Activated T-helper 1 cell treated with anti-CD3 and anti-CD28 coated beads, Interleukin-12 subunit alpha, Interleukin-12 subunit beta, Interleukin-2, Interleukin-4 antibody, amounts not matched to agents 30 ng/mL and 10 ng/mL and 1 ng/mL, durations not matched to agents 14 hours and 24 hours and 36 hours (primary cell): ENCODE measurements at regions of chr11 and their contacts with region 1.

Region 1: GRCh38 chr11:535519-536454 is at the start of gene HRAS:
- DNase-seq: peak; percentile 97
- H3K4me3 Mint-ChIP-seq: peak within 1 kb of the TSS; percentile 87
- H3K27ac Mint-ChIP-seq: peak within 1 kb of the TSS; percentile 89
- H3K4me1 Mint-ChIP-seq: peaks cover 9% of the 10 kb centered on the region
- H3K27me3 Mint-ChIP-seq: no peaks in the 10 kb centered on the region
- total RNA-seq, gene HRAS: 76.6 and 88.7 TPM in 2 replicates

Region 2: DNA sequence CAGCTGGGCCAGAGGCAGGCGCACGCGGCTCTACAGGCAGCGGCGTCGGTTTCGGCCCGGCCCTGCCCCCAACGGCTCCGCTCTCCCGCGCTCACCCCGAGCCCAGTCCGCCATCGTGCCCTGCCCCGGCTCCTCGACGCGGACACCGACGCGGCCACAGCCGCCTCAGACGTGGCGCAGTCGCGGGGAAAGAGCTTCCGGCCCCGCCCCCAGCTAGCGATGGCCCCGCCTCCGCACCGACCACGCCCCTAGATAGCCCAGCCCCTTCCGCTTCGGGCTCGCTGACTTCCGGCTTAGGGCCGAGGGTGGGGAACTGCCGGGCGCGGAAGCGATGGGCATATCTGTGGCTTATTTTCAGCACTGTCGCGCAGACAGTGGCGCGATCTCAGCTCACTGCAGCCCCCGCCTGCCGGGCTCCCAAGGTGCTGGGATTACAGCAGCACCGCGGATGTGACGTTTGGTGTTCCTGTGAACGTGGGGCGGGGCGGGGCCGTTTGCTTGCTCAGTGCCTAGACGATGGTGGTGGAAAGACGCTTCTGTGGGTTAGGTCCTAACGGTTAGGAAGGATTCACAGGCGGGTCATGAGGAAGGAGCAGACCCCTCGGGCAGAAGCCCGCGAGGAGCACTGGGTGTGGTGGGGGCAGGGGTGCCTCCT is 328.5 kb before region 1 on chr11 and contains the starts of genes BET1L and RIC8A:
- intact Hi-C with region 1: loop called (anchors 1 kb)
- DNase-seq: peak; percentile 97
- H3K4me3 Mint-ChIP-seq: peak within 1 kb of the TSS; percentile 89
- H3K27ac Mint-ChIP-seq: peak within 1 kb of the TSS; percentile 98
- H3K4me1 Mint-ChIP-seq: peaks cover 55% of the 10 kb centered on the region
- H3K27me3 Mint-ChIP-seq: no peaks in the 10 kb centered on the region
- total RNA-seq, gene BET1L: 42.0 and 48.7 TPM in 2 replicates
- total RNA-seq, gene RIC8A: 132 and 149 TPM in 2 replicates

Region 3: DNA sequence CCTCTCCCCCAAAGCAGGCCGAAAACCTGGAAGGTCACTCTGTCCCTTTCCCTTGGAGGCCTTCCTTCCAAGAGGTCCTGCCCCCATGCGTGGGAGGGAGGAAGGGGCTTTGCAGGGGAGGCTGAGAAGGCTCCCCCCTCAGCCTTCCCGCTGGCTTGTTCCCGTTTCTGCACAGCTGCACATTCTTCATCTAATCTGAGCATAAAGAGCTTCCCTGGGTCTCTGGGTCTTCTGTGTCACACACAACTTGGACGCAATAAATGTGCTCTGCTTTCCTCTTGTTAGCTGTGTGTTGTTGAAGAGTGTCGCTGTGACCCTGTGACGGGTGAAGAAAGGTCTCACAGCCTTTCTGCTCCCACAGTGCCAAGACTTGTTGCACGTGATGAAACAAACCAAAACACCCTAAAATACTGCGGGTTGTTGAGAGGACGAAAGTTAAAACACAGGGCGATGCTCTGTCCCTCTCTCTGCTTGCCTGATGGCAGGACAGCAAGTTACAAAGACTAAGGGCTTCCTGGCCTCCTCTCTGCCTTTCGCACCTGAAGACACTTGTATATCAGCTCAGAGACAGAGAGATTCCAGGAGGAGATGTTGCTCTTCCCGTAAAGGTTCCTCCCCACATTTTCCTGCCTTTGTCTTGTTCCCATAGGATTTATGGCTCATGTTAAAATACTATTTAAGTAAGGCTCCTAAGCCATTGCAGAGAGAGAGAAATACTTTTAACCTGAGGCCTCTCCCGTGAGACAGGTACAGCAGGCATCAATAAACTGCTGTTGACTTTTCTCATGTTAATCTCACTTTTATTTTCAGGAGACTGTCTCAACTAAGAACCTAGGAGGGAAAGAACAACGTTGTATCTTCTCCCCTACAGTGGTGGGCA is 199.8 kb before region 1 on chr11:
- intact Hi-C with region 1: no loop called
- DNase-seq: no peak
- H3K4me3 Mint-ChIP-seq: no peak overlapping the region
- H3K27ac Mint-ChIP-seq: no peak overlapping the region
- H3K4me1 Mint-ChIP-seq: peaks cover 14% of the 10 kb centered on the region
- H3K27me3 Mint-ChIP-seq: peaks cover 2% of the 10 kb centered on the region

Region 4: DNA sequence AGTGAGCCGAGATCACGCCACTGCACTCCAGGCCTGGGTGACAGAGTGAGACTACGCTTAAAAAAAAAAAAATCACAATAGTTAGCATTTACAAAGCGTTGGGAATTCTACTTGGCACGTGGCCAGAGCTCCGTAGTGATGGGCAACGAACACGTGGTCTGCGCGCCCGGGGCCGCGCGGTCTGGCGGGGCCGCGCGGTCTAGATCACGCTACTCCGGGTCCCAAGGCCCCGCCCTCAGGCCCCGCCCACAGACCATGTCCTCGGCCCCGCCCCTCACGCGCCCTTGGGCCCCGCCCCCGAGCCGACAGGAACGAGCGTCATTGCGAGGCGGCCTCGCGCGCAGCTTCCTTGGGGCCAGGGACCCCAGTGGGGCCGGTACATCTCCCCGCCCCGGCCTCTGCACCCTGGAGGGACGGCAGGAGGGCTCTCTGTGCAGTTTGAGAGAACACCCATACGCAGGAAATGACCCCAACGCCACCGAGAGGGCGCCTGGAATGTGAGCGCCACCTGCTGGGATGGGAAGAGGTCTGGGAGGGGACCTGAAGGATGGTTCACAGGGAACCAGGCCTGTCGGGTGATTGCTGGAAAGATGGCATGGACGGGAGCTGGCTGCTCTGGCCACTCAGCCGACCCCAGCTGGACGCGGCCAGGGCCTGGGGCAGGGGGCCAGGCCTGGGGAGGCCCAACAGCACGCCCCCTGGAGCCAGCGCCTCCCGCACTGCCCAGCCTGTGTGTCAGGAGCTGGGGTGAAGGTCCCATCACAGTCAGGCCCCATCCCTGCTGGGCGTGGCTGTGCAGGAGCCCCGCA is 87.7 kb before region 1 on chr11:
- intact Hi-C with region 1: loop called (anchors 1 kb)
- DNase-seq: peak; percentile 92
- H3K4me3 Mint-ChIP-seq: peak overlapping the region; percentile 88
- H3K27ac Mint-ChIP-seq: peak overlapping the region; percentile 91
- H3K4me1 Mint-ChIP-seq: peaks cover 16% of the 10 kb centered on the region
- H3K27me3 Mint-ChIP-seq: no peaks in the 10 kb centered on the region

Region 5: GRCh38 chr11:554824-555472 is 19.2 kb after region 1 on chr11:
- intact Hi-C with region 1: loop called (anchors 1 kb)
- DNase-seq: peak; percentile 71
- H3K4me3 Mint-ChIP-seq: no peak overlapping the region
- H3K27ac Mint-ChIP-seq: no peak overlapping the region
- H3K4me1 Mint-ChIP-seq: peaks cover 4% of the 10 kb centered on the region
- H3K27me3 Mint-ChIP-seq: peaks cover 10% of the 10 kb centered on the region

Region 6: DNA sequence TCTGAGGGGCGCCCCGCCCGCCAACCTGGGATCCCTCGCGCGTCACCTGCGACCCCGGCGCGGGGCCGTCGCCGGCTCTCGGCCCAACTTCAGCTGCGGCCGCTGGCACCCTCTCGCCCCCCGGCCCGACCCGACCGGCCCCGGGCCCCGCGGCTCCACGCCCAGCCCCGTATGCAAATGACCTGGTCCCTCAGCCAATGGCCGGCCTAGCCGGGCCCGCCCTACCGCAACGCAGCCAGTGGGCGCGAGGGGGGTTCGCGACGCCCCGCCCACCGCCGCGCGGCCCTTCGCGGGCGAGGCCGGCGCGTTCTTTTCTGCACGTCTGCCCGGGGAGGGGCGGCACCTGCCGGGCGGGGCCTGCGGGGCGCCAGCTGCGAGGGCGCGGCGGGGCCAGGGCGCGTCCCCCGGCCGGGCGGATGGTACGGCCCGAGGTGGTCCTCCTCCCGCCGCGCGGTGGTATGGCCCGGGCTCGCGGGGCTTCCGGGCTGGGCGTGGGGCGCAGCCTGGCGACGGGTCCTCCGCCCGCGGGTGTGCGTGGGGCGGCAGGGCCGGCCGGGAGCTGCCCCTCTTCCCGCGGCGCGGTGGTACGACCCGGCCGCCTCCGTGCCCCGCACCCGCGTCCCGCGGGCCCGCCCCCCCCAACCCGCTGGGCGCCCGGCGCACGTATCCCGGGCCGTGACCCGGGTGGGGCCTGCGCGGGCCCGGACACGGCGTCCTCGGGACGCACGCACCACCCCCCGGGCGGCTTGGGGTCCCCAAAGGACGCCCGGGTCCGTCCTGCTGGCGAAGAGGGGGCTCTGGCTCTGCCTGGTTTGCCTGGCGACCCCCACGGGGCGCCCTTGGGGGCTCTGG is 32.7 kb after region 1 on chr11:
- intact Hi-C with region 1: loop called (anchors 2 kb)
- DNase-seq: peak; percentile 97
- H3K4me3 Mint-ChIP-seq: peak overlapping the region; percentile 79
- H3K27ac Mint-ChIP-seq: no peak overlapping the region
- H3K4me1 Mint-ChIP-seq: peaks cover 15% of the 10 kb centered on the region
- H3K27me3 Mint-ChIP-seq: peaks cover 2% of the 10 kb centered on the region

Region 7: GRCh38 chr11:615504-616319 is 79.9 kb after region 1 on chr11 and contains the start of gene IRF7:
- intact Hi-C with region 1: loop called (anchors 1 kb)
- DNase-seq: peak; percentile 88
- H3K4me3 Mint-ChIP-seq: peak within 1 kb of the TSS; percentile 86
- H3K27ac Mint-ChIP-seq: peak within 1 kb of the TSS; percentile 85
- H3K4me1 Mint-ChIP-seq: peaks cover 7% of the 10 kb centered on the region
- H3K27me3 Mint-ChIP-seq: no peaks in the 10 kb centered on the region
- total RNA-seq, gene IRF7: 56.6 and 63.1 TPM in 2 replicates

Region 8: GRCh38 chr11:842370-843002 is 306.7 kb after region 1 on chr11 and contains the starts of genes POLR2L and TSPAN4:
- intact Hi-C with region 1: no loop called
- DNase-seq: peak; percentile 82
- H3K4me3 Mint-ChIP-seq: peak within 1 kb of the TSS; percentile 89
- H3K27ac Mint-ChIP-seq: peak within 1 kb of the TSS; percentile 73
- H3K4me1 Mint-ChIP-seq: peaks cover 16% of the 10 kb centered on the region
- H3K27me3 Mint-ChIP-seq: peaks cover 2% of the 10 kb centered on the region
- total RNA-seq, gene POLR2L: 114 and 126 TPM in 2 replicates
- total RNA-seq, gene TSPAN4: 12.8 and 13.9 TPM in 2 replicates

Region 9: GRCh38 chr11:1005928-1006327 is 470.1 kb after region 1 on chr11:
- intact Hi-C with region 1: no loop called
- DNase-seq: no peak
- H3K4me3 Mint-ChIP-seq: no peak overlapping the region
- H3K27ac Mint-ChIP-seq: no peak overlapping the region
- H3K4me1 Mint-ChIP-seq: no peaks in the 10 kb centered on the region
- H3K27me3 Mint-ChIP-seq: no peaks in the 10 kb centered on the region